IMR-90 (cell line): ENCODE measurements at regions of chr2 and their contacts with region 1.

Region 1: DNA sequence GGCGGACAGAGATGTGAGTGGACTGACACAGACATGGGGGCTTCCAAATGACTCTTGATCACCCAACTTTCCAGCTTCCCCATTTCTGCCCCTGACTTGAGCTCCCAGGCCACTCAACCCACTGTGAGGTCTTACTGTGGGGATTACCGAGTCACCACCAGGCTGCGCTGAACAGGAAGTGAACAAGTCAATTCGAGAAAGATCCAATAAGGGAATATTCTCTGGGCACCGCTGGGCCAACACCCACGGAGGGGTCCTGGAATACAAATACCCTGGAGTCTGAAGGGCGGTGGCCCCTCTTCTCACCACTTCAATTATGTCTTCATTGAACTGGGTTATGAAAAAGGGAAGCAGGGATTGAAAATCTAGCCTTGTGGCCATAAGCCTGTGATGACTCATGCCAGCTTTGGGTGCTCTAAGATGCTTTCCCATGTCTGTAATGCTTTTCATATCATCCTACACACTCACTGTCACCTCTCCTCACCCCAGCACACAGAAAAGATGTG is 37.7 kb downstream of the BCL11A start:
- DNase-seq: peak; percentile 94
- ATAC-seq: peak; percentile 69
- H3K4me3 ChIP-seq: no peak overlapping the region
- H3K27ac ChIP-seq: peak overlapping the region; percentile 98
- H3K4me1 ChIP-seq: peaks cover 13% of the 10 kb centered on the region
- H3K27me3 ChIP-seq: no peaks in the 10 kb centered on the region
- CTCF ChIP-seq: no peak
- POLR2A ChIP-seq: no peak
- RAD21 ChIP-seq: no peak

Region 2: GRCh38 chr2:60119791-60120190 is 396.0 kb before region 1 on chr2:
- CTCF ChIA-PET with region 1: no interaction called
- POLR2A ChIA-PET with region 1: no interaction called
- dilution Hi-C with region 1: no loop called
- in situ Hi-C with region 1: no loop called
- intact Hi-C with region 1: no loop called
- DNase-seq: no peak
- ATAC-seq: no peak
- H3K4me3 ChIP-seq: no peak overlapping the region
- H3K27ac ChIP-seq: no peak overlapping the region
- H3K4me1 ChIP-seq: no peaks in the 10 kb centered on the region
- H3K27me3 ChIP-seq: no peaks in the 10 kb centered on the region
- CTCF ChIP-seq: no peak
- POLR2A ChIP-seq: no peak
- RAD21 ChIP-seq: no peak

Region 3: DNA sequence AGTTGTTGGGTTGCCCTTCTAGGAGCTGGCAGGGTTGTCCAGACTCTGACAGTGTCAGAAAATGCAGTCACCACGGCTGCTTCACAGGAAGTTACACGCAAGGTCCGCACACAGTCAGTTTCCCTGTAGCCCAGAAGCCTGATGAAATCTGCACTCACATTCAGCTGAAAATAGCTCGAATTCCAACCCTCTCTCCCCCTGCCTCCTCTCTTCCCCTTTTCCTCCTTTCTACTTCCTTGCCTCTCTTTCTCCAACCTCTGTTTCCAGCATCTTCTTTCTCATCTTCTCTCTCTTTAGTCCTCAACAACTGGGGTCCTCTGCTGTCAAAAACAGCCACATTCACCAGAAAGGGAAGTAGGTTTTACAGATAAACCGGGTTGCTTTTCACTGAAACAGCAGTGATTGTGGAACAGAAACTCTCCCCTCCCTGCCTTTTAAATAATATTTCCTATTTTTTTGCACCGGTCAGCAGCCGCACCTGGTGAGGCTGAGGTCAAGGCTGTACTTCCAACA is 31.6 kb before region 1 on chr2:
- CTCF ChIA-PET with region 1: no interaction called
- POLR2A ChIA-PET with region 1: interaction called, 3 read pairs
- dilution Hi-C with region 1: no loop called
- in situ Hi-C with region 1: no loop called
- intact Hi-C with region 1: loop called (anchors 2 kb)
- DNase-seq: peak; percentile 76
- ATAC-seq: peak; percentile 80
- H3K4me3 ChIP-seq: no peak overlapping the region
- H3K27ac ChIP-seq: peak overlapping the region; percentile 50
- H3K4me1 ChIP-seq: peaks cover 10% of the 10 kb centered on the region
- H3K27me3 ChIP-seq: no peaks in the 10 kb centered on the region
- CTCF ChIP-seq: no peak
- POLR2A ChIP-seq: no peak
- RAD21 ChIP-seq: no peak

Region 4: DNA sequence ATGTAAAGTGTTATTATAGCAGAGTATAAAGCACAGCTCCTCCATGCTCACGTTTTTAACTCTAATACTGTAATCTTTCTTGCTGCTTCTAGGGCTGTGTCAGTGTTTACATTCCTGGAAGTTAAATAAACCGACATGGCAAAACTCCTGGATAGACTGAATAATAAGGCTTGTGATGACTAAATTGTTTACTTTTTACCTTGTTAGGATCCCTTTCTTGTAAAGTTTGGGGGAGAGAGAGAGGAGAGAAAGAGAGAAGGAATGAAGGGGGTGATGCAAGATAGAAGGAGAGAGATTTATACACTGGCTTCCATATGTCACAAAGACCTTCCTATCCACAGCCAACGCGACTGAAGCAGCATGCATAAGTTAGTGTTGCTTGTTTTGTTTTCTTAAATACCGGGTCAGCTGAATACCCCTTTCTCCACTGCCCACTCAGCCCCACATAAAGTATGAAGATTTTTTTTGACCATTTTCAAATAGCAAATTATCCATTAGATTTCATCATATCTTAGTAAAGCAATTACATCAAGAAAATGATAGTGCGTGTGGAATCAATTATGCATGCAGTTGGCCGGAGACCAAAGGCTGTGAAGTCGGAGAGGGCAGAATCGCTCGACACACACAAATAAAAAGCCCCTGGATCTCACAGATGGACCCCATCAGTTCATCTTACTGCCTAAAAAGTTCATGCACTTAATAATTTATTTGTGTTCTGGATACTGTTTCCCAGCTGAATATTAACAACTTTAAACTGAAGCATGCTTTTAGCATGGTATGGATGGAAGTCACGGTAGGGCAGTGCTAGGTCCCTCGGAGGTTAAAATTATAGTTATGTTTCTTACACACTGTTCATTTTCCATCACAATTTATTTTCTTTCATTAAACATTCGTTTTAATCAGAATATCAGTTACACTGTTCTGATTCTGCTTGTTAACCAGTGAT is 17.6 kb after region 1 on chr2:
- CTCF ChIA-PET with region 1: no interaction called
- POLR2A ChIA-PET with region 1: interaction called, 12 read pairs
- dilution Hi-C with region 1: no loop called
- in situ Hi-C with region 1: no loop called
- intact Hi-C with region 1: loop called (anchors 1 kb)
- DNase-seq: peak; percentile 89
- ATAC-seq: peak; percentile 94
- H3K4me3 ChIP-seq: no peak overlapping the region
- H3K27ac ChIP-seq: peak overlapping the region; percentile 72; the same call in 1 of the 2 replicates
- H3K4me1 ChIP-seq: peaks cover 4% of the 10 kb centered on the region; the same call in 1 of the 2 replicates
- H3K27me3 ChIP-seq: peaks cover 28% of the 10 kb centered on the region
- CTCF ChIP-seq: no peak
- POLR2A ChIP-seq: no peak
- RAD21 ChIP-seq: no peak